ENCODE measurements at regions of chr10 and their contacts with region 1.

Region 1: GRCh38 chr10:115491526-115492140 is 398.5 kb downstream of the ATRNL1 start:
- DNase-seq: peak; percentile 72

Region 2: GRCh38 chr10:114714281-114714741 is 777.3 kb before region 1 on chr10:
- intact Hi-C with region 1: no loop called
- DNase-seq: no peak

Region 3: DNA sequence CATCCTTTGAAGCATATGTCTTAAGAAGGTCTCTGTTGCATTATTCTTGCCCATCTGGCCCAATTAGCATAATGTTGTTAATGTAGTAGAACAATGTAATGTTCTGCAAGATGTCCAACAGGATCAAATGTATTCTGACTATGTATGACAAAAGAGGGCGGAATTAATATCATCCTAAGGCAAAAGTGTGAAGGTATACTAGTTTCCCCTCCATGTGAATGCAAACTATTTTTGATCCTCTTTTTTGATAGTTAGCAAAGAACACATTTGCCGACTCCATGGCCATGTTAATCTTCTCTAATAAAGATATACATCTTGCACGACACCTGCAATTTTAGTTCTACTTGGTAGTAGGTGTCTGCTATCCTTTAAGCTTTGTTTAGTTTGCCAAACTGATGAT is 240.8 kb before region 1 on chr10:
- intact Hi-C with region 1: no loop called
- DNase-seq: no peak

Region 4: GRCh38 chr10:115514895-115515294 is 23.3 kb after region 1 on chr10:
- intact Hi-C with region 1: loop called in 1 of 2 experiments (anchors 1 kb)
- DNase-seq: no peak

Region 5: GRCh38 chr10:115727129-115727528 is 235.5 kb after region 1 on chr10:
- intact Hi-C with region 1: no loop called
- DNase-seq: no peak

Measured in posterior vena cava (tissue), 2 donors.